ENCODE measurements at regions of chr15 and their contacts with region 1.

Region 1: GRCh38 chr15:65862682-65863081 is 6.6 kb upstream of the RAB11A start:
- DNase-seq: peak; percentile 85
- ATAC-seq: peak; percentile 99
- H3K4me3 Mint-ChIP-seq: no peak overlapping the region
- H3K27ac Mint-ChIP-seq: no peak overlapping the region
- H3K4me1 Mint-ChIP-seq: peaks cover 15% of the 10 kb centered on the region
- H3K27me3 Mint-ChIP-seq: no peaks in the 10 kb centered on the region

Region 2: GRCh38 chr15:65275728-65276126 is 587.0 kb before region 1 on chr15:
- CTCF ChIA-PET with region 1: no interaction called
- POLR2A ChIA-PET with region 1: no interaction called
- intact Hi-C with region 1: no loop called
- DNase-seq: no peak
- ATAC-seq: peak; percentile 20
- H3K4me3 Mint-ChIP-seq: no peak overlapping the region
- H3K27ac Mint-ChIP-seq: peak overlapping the region; percentile 86
- H3K4me1 Mint-ChIP-seq: peaks cover 37% of the 10 kb centered on the region
- H3K27me3 Mint-ChIP-seq: no peaks in the 10 kb centered on the region

Region 3: DNA sequence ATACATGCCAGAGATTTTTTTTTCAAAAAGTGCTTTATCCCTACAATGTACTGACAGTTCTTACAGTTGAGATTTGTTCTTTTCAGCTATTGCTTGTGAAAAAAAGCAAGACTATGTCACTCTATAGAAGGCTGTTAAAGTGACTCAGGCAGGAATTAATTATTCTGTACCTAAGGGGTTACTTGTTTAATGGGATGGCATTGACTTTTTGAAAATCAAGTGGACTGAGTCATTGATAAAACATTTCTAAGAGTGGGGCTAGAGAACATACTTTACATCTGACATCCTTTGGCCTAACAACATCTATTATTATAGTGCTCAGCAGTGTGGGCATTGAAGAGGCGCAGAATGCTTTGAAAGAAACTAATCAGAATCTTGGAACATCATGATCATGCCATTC is 286.0 kb before region 1 on chr15:
- CTCF ChIA-PET with region 1: no interaction called
- POLR2A ChIA-PET with region 1: no interaction called
- intact Hi-C with region 1: no loop called
- DNase-seq: no peak
- ATAC-seq: no peak
- H3K4me3 Mint-ChIP-seq: no peak overlapping the region
- H3K27ac Mint-ChIP-seq: no peak overlapping the region
- H3K4me1 Mint-ChIP-seq: no peaks in the 10 kb centered on the region
- H3K27me3 Mint-ChIP-seq: no peaks in the 10 kb centered on the region

Region 4: DNA sequence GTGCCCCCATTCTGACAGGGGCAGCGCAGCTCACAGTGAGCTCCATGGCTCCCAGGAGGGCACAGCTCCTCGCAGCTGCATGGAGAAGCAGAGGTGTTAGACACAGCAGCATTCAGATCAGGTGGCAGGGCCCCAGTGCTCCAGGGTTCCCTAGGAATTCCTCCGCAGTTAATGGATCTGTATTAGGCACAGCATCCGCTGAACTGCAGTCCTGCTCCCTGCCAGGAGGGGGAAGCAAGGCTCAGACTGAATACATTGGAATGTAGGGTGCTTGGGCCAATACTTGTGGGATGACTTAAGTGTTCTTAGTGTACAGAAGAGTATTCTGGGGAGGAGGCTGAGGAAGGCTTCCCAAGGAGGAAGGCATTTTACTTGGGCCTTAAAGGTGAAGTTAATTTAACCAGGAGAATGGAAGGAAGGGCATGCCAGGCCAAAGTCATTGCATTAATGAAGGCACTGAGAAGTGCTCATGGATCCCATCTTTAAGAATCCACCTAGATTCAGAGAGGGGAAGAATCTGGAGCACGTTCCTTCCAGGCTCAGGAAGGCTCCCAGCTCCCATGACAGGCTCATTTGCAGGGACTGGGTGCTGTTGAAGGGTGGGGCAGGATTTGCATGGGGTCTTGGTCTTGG is 118.3 kb after region 1 on chr15:
- CTCF ChIA-PET with region 1: interaction called, 13 read pairs
- POLR2A ChIA-PET with region 1: no interaction called
- intact Hi-C with region 1: no loop called
- DNase-seq: peak; percentile 48
- ATAC-seq: no peak
- H3K4me3 Mint-ChIP-seq: no peak overlapping the region
- H3K27ac Mint-ChIP-seq: no peak overlapping the region
- H3K4me1 Mint-ChIP-seq: peaks cover 7% of the 10 kb centered on the region
- H3K27me3 Mint-ChIP-seq: peaks cover 24% of the 10 kb centered on the region